PC-3 (cell line): ENCODE measurements at regions of chr14 and their contacts with region 1.

Region 1: DNA sequence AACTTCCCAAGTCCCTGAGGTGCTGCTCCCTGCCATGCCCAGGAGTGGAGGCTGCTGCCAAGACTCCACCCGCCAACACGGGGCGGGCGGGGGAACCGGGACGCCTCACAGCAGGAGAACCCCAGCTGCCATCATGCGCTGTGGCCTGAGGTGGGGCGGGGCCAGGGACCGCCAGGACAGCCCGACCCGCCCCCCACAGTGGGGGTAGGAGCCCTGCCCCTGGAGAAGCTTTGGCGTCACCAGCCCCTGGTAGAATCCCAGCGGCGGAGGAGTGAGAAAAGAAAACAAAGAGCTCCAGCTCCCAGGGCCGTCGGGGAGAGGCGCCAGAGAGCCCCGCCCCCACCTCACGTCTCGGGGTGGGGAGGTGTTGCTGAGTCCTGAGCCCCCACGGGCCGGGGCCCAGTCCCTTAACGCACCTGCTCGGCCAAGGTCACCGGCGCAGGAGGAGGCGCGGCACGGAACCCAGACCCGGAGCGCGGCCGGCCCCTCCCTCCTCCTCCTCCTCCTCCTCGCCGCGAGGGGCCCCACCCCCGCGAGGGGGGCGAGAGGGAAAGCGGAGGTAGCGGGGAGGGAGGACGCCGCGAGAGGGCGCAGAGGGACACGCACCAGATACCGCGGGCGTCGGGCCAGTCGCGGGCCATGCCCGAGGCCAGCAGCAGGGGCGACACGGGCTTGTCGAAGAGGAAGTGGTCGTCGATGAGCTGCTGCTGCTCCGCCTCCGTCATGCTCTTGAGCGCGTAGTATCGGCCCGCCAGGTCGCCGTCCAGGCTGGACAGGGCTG is 1.8 kb downstream of the CKB start:
- DNase-seq: peak; percentile 82
- ATAC-seq: peak; percentile 40
- H3K4me3 ChIP-seq: peak overlapping the region; percentile 89
- H3K27ac ChIP-seq: no peak overlapping the region
- H3K4me1 ChIP-seq: peaks cover 9% of the 10 kb centered on the region
- H3K27me3 ChIP-seq: no peaks in the 10 kb centered on the region
- CTCF ChIP-seq: peak; percentile 60

Region 2: DNA sequence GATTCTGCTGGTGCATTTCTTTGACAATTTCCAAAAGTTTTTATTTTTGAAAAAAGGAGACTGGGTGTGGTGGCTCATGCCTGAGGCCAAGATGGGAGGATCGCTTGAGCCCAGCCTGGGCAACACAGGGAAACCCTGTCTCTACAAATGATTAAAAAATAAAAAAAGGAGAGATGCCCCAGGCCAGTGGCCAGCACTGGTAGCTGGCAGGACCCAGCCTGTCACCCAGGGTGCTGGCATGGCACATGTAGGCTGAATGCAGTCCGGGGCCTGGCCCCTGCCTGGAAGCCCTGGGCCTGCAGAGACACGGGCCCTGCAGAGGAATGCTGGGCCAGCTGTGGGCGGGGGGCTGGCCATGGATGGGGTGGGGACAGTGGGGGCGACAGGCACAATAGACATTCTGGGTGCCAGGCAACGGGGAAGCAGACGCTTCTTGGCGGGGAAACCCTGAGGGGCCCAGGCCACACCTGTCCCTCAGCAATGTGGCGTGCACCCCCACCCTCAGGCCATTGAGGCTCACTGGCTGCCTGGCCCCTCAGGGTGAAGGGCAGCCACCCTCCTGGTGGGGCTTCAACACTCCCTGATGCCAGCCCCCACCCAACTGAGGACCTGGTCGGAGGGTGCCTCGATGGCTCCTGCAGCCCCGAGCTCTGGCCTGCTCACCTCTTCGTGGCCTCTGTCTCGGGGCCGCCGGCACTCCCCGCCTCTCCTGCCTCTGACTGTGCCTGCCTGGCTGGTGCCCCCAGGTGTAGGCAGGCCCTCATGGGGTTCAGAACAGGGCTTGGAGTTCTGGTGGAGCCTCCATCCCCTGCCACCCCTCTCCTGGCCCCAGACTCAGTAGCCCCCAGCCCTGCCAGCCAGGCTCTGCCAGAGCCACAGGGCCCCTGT is 20.2 kb after region 1 on chr14:
- CTCF ChIA-PET with region 1: interaction called, 7 read pairs
- POLR2A ChIA-PET with region 1: interaction called, 5 read pairs
- intact Hi-C with region 1: loop called (anchors 1 kb)
- DNase-seq: no peak
- ATAC-seq: peak; percentile 21
- H3K4me3 ChIP-seq: peak overlapping the region; percentile 7; the same call in 1 of the 2 replicates
- H3K27ac ChIP-seq: peak overlapping the region; percentile 96
- H3K4me1 ChIP-seq: peaks cover 47% of the 10 kb centered on the region
- H3K27me3 ChIP-seq: no peaks in the 10 kb centered on the region
- CTCF ChIP-seq: no peak

Region 3: DNA sequence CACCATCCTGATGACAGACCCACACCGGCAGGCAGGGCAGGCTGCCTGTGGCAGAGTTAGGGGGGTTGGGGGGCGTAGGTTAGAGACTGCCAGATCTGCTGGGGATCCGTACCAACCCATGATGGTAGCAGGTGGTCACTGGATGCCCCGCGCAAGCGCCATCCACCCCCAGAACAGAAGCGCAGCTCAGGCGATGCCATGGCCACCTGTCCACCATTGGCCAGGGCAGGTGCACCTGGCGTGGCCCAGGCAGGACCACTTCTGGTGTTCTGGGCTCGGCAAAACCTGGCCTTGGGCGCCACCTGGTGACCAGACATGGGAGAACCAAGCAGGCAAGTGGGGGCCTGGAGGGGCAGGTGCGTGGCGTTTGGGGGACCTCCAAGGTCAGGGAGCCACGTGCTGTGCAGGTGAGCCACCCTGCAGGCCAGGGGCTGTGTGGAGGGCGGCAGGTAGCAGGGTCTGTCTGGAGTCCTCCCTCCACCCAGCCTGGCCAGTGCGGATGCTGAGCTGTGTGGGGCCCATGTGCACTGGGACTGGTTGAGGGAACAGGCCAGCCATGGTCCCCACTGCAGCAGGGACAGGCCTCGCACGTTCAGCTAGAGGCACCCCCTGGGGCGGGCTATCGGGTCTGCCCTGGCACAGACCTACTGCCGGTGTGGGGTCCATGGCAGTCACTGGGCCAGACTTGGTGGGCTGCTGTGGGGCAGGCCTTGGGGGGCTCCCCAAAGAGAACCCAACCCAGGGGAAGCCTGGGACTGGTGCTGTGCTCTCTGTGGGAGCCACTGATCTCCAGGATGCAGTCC is 26.0 kb after region 1 on chr14:
- CTCF ChIA-PET with region 1: interaction called, 8 read pairs
- POLR2A ChIA-PET with region 1: no interaction called
- intact Hi-C with region 1: loop called (anchors 1 kb)
- DNase-seq: peak; percentile 76
- ATAC-seq: peak; percentile 75
- H3K4me3 ChIP-seq: no peak overlapping the region
- H3K27ac ChIP-seq: no peak overlapping the region
- H3K4me1 ChIP-seq: peaks cover 19% of the 10 kb centered on the region
- H3K27me3 ChIP-seq: no peaks in the 10 kb centered on the region
- CTCF ChIP-seq: peak; percentile 96